ENCODE measurements at regions of chr10 and their contacts with region 1.

Region 1: DNA sequence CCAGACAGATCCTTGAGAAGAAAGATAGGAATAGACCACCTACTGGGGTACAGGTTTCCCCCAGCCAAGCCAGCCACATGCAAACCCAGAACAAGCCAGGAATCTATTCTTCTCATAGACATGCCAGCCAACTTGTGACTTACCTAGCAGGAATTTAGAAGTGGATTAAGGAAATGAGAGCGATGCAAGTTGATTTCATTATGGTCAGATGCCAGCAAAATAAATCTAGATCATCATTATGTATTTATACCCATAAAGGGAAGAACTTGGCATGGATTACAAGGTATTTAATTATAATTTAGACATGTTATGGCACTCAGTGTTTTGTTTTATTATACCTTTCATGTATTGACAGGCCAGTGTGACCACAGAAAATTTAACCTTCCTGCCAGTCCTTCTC is 32.8 kb downstream of the SLC35G1 start:
- DNase-seq: no peak
- H3K4me3 ChIP-seq: no peak overlapping the region
- H3K27ac ChIP-seq: no peak overlapping the region
- H3K4me1 ChIP-seq: no peaks in the 10 kb centered on the region
- H3K27me3 ChIP-seq: no peaks in the 10 kb centered on the region
- CTCF ChIP-seq: no peak
- EP300 ChIP-seq: no peak
- POLR2A ChIP-seq: no peak

Region 2: DNA sequence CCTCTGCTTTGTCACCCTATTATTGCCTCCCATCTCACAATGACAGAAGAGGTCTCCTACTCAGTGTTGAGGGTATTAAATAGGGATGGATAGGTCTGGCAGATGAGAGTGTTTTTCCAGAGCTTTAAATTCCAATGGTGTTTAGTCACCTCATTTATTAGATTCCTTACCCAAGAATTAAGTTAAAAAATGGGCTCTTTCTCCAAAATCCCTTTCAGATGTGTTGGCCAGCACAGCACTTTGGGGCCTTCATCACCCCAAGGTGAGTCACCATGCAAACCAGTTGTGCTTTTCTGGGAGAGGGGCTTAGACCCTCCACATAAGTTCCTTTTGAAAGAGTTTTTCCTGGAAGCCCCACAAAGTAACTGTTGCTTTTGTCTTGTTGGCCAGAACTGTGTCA is 774.5 kb before region 1 on chr10:
- in situ Hi-C with region 1: no loop called
- intact Hi-C with region 1: no loop called
- DNase-seq: no peak
- H3K4me3 ChIP-seq: no peak overlapping the region
- H3K27ac ChIP-seq: no peak overlapping the region
- H3K4me1 ChIP-seq: no peaks in the 10 kb centered on the region
- H3K27me3 ChIP-seq: no peaks in the 10 kb centered on the region
- CTCF ChIP-seq: no peak
- EP300 ChIP-seq: no peak
- POLR2A ChIP-seq: no peak

Region 3: GRCh38 chr10:93879273-93879672 is 47.3 kb before region 1 on chr10:
- in situ Hi-C with region 1: no loop called
- intact Hi-C with region 1: loop called (anchors 2 kb)
- DNase-seq: no peak
- H3K4me3 ChIP-seq: no peak overlapping the region
- H3K27ac ChIP-seq: no peak overlapping the region
- H3K4me1 ChIP-seq: no peaks in the 10 kb centered on the region
- H3K27me3 ChIP-seq: peaks cover 3% of the 10 kb centered on the region
- CTCF ChIP-seq: no peak
- EP300 ChIP-seq: no peak
- POLR2A ChIP-seq: no peak

Measured in transverse colon (tissue), 4 donors.